Breast epithelium (tissue), 4 donors: ENCODE measurements at regions of chr14 and their contacts with region 1.

Region 1: GRCh38 chr14:105123981-105124765 is 44.4 kb downstream of the JAG2 start:
- DNase-seq: peak in 1 of 2 donors; percentile 11
- H3K4me3 ChIP-seq: no peak overlapping the region
- H3K27ac ChIP-seq: no peak overlapping the region
- H3K4me1 ChIP-seq: peaks cover 0 to 5% of the 10 kb centered on the region in 2 donors
- H3K27me3 ChIP-seq: peaks cover 0 to 3% of the 10 kb centered on the region in 2 donors
- CTCF ChIP-seq: no peak
- POLR2A ChIP-seq: no peak

Region 2: GRCh38 chr14:105147671-105148603 is 23.8 kb after region 1 on chr14:
- intact Hi-C with region 1: loop called (anchors 1 kb)
- DNase-seq: no peak
- H3K4me3 ChIP-seq: no peak overlapping the region
- H3K27ac ChIP-seq: no peak overlapping the region
- H3K4me1 ChIP-seq: no peaks in the 10 kb centered on the region
- H3K27me3 ChIP-seq: no peaks in the 10 kb centered on the region
- CTCF ChIP-seq: no peak
- POLR2A ChIP-seq: no peak